ENCODE measurements at regions of chr6 and their contacts with region 1.

Region 1: DNA sequence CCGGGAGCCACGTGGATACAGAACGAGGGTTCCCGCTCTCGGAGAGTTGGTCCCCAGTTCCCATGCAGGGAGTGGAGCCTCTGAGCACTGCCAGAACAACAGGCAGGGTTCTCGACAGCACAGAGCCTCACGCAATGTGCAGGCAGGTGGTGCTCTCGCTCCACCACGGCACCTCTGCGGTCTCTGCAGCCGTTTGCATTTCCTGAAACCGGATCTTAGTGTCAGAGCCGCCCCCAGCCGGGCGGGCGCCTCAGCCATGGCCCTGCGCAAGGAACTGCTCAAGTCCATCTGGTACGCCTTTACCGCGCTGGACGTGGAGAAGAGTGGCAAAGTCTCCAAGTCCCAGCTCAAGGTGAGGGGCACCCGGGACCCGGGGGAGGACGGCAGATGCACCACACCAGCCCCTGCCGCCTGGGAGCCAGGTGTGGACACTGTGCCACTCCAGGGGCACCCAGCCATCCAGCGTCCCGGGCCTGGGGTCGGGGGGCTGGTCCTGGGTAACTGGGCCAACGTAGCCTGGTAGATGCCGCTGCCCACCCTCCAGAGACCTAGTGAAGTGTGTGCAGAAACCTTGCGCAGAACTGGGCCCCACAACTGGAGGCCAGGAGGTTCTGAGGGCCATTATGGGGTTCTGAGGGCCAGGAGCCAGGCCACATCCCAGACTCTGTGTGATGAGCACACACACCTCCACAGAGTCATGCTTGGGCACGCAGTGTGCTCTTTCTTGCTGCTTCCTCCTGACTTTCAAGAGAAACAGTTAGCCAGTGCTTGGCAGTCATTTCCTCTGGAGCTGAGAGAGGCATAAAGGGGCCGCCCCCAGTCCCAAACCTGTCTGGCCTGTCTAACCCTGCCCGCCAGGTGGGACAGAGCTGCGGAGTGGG is at the start of gene DEF6:
- DNase-seq: peak; percentile 80 to 90 (median 83)
- H3K4me3 ChIP-seq: peak within 1 kb of the TSS; percentile 68 to 94 (median 88)
- H3K4me3 Mint-ChIP-seq: peak within 1 kb of the TSS; percentile 79 to 90
- H3K27ac ChIP-seq: peak within 1 kb of the TSS; percentile 80 to 94
- H3K27ac Mint-ChIP-seq: peak within 1 kb of the TSS; percentile 91 to 97 (median 95)
- H3K4me1 ChIP-seq: peaks cover 63 to 66% of the 10 kb centered on the region in 2 donors
- H3K4me1 Mint-ChIP-seq: peaks cover 60% of the 10 kb centered on the region
- H3K27me3 ChIP-seq: no peaks in the 10 kb centered on the region
- H3K27me3 Mint-ChIP-seq: peaks cover 0 to 4% (median 0%) of the 10 kb centered on the region in 3 donors
- CTCF ChIP-seq: peak; percentile 80
- polyA plus RNA-seq, gene DEF6: 41.2 to 110 (median 59.3) TPM

Region 2: DNA sequence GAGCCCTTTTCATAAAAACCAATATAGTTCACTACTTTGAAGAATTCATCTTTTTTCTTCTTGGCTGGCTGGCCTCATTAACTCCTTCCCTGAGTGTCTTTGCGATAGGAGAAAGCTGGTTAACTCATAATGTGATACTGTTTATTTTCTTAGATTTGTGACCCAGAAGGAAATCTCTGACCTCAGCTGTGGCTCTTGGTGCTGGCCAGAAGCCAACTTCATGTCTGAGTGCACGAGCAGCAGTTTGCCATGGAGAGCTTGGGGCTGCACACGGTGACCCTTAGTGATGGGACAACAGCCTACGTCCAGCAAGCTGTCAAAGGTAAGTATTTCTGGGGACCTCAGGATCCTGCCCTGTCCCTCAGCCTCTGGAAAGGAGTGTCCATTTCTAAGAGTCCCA is 16.9 kb before region 1 on chr6:
- intact Hi-C with region 1: no loop called
- DNase-seq: no peak
- H3K4me3 ChIP-seq: no peak overlapping the region
- H3K4me3 Mint-ChIP-seq: no peak overlapping the region
- H3K27ac ChIP-seq: no peak overlapping the region
- H3K27ac Mint-ChIP-seq: no peak overlapping the region
- H3K4me1 ChIP-seq: peaks cover 0 to 3% of the 10 kb centered on the region in 2 donors
- H3K4me1 Mint-ChIP-seq: peaks cover 9% of the 10 kb centered on the region
- H3K27me3 ChIP-seq: no peaks in the 10 kb centered on the region
- H3K27me3 Mint-ChIP-seq: no peaks in the 10 kb centered on the region
- CTCF ChIP-seq: no peak

Region 3: DNA sequence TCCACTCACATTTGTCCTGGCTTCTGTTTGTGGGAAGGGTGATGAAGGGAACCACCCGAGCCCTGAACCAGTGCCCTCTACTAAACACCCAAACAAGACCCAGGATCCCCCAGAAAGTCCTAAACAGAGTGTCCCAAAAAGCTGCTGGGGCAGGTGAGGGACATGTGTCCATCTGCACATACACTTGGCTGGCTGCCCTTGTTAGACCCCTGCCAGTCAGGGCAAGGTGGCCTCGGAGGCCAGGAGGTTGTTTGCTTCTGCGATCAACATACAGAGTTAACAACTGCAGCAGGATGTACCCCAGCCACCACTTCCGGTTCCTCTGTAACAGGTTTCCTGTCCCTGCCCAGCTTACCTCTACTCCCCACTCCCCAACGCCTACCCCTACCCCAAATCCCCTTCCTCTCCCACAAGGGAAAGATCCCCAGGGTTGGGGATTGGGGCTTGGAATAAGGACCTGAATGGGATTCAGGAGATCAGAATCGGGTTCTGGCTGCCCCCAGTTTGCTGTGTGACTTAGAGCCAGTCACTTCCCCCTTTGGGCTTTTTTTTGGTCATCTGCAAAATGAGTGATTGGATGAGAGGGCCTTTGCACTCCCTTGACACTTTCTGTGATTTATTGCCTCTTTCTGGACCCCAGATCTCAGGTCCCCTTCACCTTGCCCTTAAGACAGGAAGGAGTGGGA is 13.7 kb after region 1 on chr6:
- intact Hi-C with region 1: loop called in 1 of 2 experiments (anchors 2 kb)
- DNase-seq: peak in 2 of 3 donors; percentile 46 to 47
- H3K4me3 ChIP-seq: peak overlapping the region in 2 of 3 experiments; percentile 13 to 58
- H3K4me3 Mint-ChIP-seq: peak overlapping the region; percentile 64 to 77
- H3K27ac ChIP-seq: peak overlapping the region; percentile 47 to 81
- H3K27ac Mint-ChIP-seq: peak overlapping the region; percentile 88 to 96 (median 93)
- H3K4me1 ChIP-seq: peaks cover 42 to 48% of the 10 kb centered on the region in 2 donors
- H3K4me1 Mint-ChIP-seq: peaks cover 52% of the 10 kb centered on the region
- H3K27me3 ChIP-seq: no peaks in the 10 kb centered on the region
- H3K27me3 Mint-ChIP-seq: no peaks in the 10 kb centered on the region
- CTCF ChIP-seq: no peak

Region 4: GRCh38 chr6:35342258-35343091 is 44.6 kb after region 1 on chr6 and contains the start of gene PPARD:
- intact Hi-C with region 1: loop called in 1 of 2 experiments (anchors 2 kb)
- DNase-seq: peak; percentile 90 to 97 (median 95)
- H3K4me3 ChIP-seq: peak within 1 kb of the TSS; percentile 69 to 96 (median 94)
- H3K4me3 Mint-ChIP-seq: peak within 1 kb of the TSS; percentile 96
- H3K27ac ChIP-seq: peak within 1 kb of the TSS in 1 of 2 donors; percentile 73
- H3K27ac Mint-ChIP-seq: peak within 1 kb of the TSS; percentile 88 to 98 (median 95)
- H3K4me1 ChIP-seq: peaks cover 14 to 18% of the 10 kb centered on the region in 2 donors
- H3K4me1 Mint-ChIP-seq: peaks cover 42% of the 10 kb centered on the region
- H3K27me3 ChIP-seq: peaks cover 6 to 18% of the 10 kb centered on the region in 2 donors
- H3K27me3 Mint-ChIP-seq: peaks cover 8 to 29% (median 21%) of the 10 kb centered on the region in 3 donors
- CTCF ChIP-seq: peak; percentile 97
- polyA plus RNA-seq, gene PPARD: 1.2 to 22.0 (median 2.4) TPM

Region 5: GRCh38 chr6:35452186-35453090 is 154.6 kb after region 1 on chr6 and contains the start of gene FANCE:
- intact Hi-C with region 1: loop called (anchors 1 to 5 kb)
- DNase-seq: peak; percentile 88 to 93 (median 92)
- H3K4me3 ChIP-seq: peak within 1 kb of the TSS; percentile 53 to 84 (median 73)
- H3K4me3 Mint-ChIP-seq: peak within 1 kb of the TSS; percentile 82 to 86
- H3K27ac ChIP-seq: no peak within 1 kb of the TSS
- H3K27ac Mint-ChIP-seq: peak within 1 kb of the TSS in 5 of 7 donors; percentile 30 to 82 (median 68)
- H3K4me1 ChIP-seq: peaks cover 29 to 37% of the 10 kb centered on the region in 2 donors
- H3K4me1 Mint-ChIP-seq: peaks cover 37% of the 10 kb centered on the region
- H3K27me3 ChIP-seq: peaks cover 0 to 7% of the 10 kb centered on the region in 2 donors
- H3K27me3 Mint-ChIP-seq: peaks cover 12 to 23% (median 20%) of the 10 kb centered on the region in 3 donors
- CTCF ChIP-seq: no peak
- polyA plus RNA-seq, gene FANCE: 1.8 to 3.0 (median 2.9) TPM

Region 6: DNA sequence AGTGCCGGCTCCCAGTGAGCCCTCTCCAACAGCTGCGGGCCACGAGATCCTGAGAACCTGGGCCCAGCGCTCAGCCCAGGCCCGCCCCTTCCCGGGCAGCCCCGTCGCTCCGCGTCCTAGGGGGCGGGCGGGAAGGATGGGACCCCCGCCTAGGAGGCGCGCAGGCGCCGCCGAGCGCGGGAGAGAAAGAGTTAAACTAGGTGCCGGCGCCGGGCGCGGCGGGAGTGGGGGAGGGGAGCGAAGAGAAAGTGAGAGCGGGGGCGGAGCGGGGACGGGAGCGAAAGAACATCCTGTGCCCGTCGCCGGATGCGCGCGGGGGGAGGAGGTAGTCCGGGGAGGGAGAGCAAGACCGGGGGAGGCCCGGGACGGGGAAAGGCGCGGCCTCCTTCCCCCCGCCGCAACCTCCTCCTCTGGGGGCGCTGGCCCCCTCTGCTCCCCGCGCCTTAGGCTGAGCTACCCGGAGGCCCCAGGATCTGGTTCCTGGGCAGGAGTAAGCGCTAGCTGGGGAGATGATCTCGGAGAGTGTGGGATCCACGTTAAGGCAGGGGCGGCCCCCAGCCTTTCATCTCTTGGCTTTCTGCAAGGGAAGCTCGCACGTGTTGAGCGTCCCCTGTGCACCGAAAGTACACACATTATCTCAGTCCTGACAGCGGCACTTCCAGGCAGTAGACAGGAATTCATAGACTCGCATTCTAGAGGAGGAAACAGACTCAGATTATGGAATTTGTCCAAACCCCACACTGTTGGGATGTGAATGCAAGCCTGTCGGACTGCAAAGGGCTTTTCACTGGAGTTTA is 434.1 kb after region 1 on chr6:
- intact Hi-C with region 1: loop called in 1 of 2 experiments (anchors 10 kb)
- DNase-seq: peak; percentile 55 to 59 (median 57)
- H3K4me3 ChIP-seq: peak overlapping the region; percentile 76 to 95 (median 76)
- H3K4me3 Mint-ChIP-seq: peak overlapping the region; percentile 83 to 92
- H3K27ac ChIP-seq: peak overlapping the region; percentile 91 to 92
- H3K27ac Mint-ChIP-seq: peak overlapping the region; percentile 86 to 95 (median 93)
- H3K4me1 ChIP-seq: peaks cover 53 to 71% of the 10 kb centered on the region in 2 donors
- H3K4me1 Mint-ChIP-seq: peaks cover 58% of the 10 kb centered on the region
- H3K27me3 ChIP-seq: no peaks in the 10 kb centered on the region
- H3K27me3 Mint-ChIP-seq: peaks cover 0 to 2% (median 0%) of the 10 kb centered on the region in 3 donors
- CTCF ChIP-seq: no peak